Tibial artery (tissue), 4 donors: ENCODE measurements at regions of chr11 and their contacts with region 1.

Region 1: GRCh38 chr11:43955381-43956118 is 13.1 kb downstream of the C11orf96 start:
- DNase-seq: no peak
- H3K4me3 ChIP-seq: no peak overlapping the region
- H3K27ac ChIP-seq: peak overlapping the region; percentile 33 to 58
- H3K4me1 ChIP-seq: peaks cover 0 to 21% (median 2%) of the 10 kb centered on the region in 4 donors
- H3K27me3 ChIP-seq: no peaks in the 10 kb centered on the region
- CTCF ChIP-seq: no peak

Region 2: DNA sequence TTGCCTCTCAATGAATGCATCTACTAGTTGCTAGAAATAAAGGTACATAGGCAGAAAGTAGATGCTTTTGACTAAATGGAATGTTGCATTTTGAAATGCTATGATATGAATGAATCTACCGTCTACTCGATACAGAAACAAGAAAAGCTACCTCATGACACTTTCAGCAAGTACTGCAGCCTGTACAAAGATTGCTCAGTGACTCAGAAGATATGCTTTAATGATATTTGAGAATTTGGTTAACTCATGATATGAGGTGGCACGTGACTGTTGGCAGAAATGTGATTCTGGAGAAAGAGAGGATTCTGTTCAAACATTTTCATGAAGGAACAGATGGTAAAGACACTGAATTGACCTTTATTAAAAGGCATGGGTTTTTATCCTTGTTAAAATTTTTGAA is 199.0 kb before region 1 on chr11:
- intact Hi-C with region 1: no loop called
- DNase-seq: no peak
- H3K4me3 ChIP-seq: no peak overlapping the region
- H3K27ac ChIP-seq: no peak overlapping the region
- H3K4me1 ChIP-seq: no peaks in the 10 kb centered on the region
- H3K27me3 ChIP-seq: no peaks in the 10 kb centered on the region
- CTCF ChIP-seq: no peak

Region 3: DNA sequence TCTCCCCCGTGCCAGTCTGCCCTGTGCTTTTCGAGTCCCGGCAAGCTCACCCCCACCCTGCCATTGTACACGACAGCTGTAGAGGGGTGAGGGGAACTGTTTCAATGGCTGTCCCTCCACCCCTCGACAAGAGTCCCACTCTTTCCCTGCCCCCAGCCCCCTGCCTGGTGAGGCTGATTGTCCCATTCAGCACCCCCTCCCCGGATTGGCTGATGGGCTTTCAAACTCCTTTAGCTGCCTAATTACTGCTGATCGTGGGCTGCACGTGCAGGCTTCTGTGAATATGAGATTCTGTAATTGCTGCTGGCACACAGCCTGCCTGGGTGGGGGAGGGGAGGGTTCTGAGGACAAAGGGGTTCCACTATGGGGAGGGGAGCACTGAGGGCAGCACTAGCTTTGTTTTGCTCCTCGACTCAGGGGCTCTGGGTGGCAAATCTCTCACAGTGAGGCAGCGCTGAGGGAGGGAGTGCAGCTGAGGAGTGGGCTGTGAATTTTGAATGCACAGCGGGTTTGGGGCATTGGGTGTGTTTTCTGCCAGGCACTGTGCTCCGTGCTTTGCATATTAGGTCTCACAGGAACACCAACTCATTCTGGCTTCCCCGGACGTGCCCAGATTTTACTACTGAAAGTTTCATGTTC is 49.6 kb after region 1 on chr11:
- intact Hi-C with region 1: loop called (anchors 1 kb)
- DNase-seq: peak; percentile 19 to 62
- H3K4me3 ChIP-seq: no peak overlapping the region
- H3K27ac ChIP-seq: peak overlapping the region; percentile 78 to 80
- H3K4me1 ChIP-seq: peaks cover 0 to 92% (median 41%) of the 10 kb centered on the region in 4 donors
- H3K27me3 ChIP-seq: no peaks in the 10 kb centered on the region
- CTCF ChIP-seq: no peak